ENCODE measurements at regions of chr17 and their contacts with region 1.

Region 1: GRCh38 chr17:75412455-75413317 is 7.2 kb upstream of the GRB2 start:
- DNase-seq: peak in 1 of 2 donors; percentile 64
- ATAC-seq: peak; percentile 78
- H3K4me3 ChIP-seq: peak overlapping the region in 1 of 2 donors; percentile 15
- H3K27ac ChIP-seq: no peak overlapping the region
- H3K4me1 ChIP-seq: no peaks in the 10 kb centered on the region
- H3K27me3 ChIP-seq: no peaks in the 10 kb centered on the region

Region 2: GRCh38 chr17:75271233-75271954 is 141.3 kb before region 1 on chr17:
- intact Hi-C with region 1: loop called in 1 of 2 experiments (anchors 5 kb)
- DNase-seq: peak; percentile 88 to 94
- ATAC-seq: peak; percentile 92
- H3K4me3 ChIP-seq: peak overlapping the region; percentile 2 to 76
- H3K27ac ChIP-seq: peak overlapping the region in 1 of 2 donors; percentile 48
- H3K4me1 ChIP-seq: peaks cover 0 to 3% of the 10 kb centered on the region in 2 donors
- H3K27me3 ChIP-seq: no peaks in the 10 kb centered on the region

Region 3: GRCh38 chr17:75319904-75320691 is 92.6 kb before region 1 on chr17:
- intact Hi-C with region 1: loop called in 1 of 2 experiments (anchors 2 kb)
- DNase-seq: no peak
- ATAC-seq: no peak
- H3K4me3 ChIP-seq: no peak overlapping the region
- H3K27ac ChIP-seq: no peak overlapping the region
- H3K4me1 ChIP-seq: no peaks in the 10 kb centered on the region
- H3K27me3 ChIP-seq: no peaks in the 10 kb centered on the region

Region 4: DNA sequence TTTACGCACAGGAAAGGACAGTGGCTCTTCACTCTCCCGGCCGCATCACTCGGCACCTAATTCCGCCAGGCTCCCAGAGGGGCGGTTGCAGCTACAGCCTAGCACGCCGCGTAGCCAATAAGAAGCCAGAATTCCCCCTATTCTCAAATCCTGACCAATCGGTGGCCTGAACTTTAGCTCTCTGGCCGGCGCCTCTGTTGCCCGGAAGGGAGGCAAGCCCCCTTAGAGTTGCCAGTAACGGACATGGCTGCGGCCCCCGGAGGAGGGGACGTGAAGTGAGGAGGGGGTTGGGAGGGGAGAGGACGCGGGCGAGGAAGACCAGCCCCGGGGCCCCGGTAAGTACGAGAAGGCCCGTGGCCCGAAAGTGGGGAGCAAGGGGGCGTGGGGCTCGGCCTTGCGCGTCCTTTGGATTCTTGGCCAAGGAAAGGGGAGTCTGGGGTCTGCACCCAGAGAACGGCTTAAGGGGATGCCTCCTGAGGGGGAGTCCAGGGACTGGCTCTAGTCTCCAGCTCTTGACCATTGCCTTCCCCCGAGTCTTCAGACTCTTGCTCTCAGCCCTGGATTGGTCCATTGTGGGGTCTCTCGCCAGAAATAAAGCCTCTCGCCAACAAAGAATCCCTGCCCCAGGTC is 43.8 kb after region 1 on chr17 and contains the start of gene TMEM94:
- intact Hi-C with region 1: no loop called
- DNase-seq: peak; percentile 96 to 97
- ATAC-seq: peak; percentile 99
- H3K4me3 ChIP-seq: peak within 1 kb of the TSS; percentile 85 to 92
- H3K27ac ChIP-seq: peak within 1 kb of the TSS; percentile 31 to 60
- H3K4me1 ChIP-seq: peaks cover 0 to 3% of the 10 kb centered on the region in 2 donors
- H3K27me3 ChIP-seq: no peaks in the 10 kb centered on the region
- total RNA-seq, gene TMEM94: 51.5 to 74.8 TPM